ENCODE measurements at regions of chr7 and their contacts with region 1.

Region 1: DNA sequence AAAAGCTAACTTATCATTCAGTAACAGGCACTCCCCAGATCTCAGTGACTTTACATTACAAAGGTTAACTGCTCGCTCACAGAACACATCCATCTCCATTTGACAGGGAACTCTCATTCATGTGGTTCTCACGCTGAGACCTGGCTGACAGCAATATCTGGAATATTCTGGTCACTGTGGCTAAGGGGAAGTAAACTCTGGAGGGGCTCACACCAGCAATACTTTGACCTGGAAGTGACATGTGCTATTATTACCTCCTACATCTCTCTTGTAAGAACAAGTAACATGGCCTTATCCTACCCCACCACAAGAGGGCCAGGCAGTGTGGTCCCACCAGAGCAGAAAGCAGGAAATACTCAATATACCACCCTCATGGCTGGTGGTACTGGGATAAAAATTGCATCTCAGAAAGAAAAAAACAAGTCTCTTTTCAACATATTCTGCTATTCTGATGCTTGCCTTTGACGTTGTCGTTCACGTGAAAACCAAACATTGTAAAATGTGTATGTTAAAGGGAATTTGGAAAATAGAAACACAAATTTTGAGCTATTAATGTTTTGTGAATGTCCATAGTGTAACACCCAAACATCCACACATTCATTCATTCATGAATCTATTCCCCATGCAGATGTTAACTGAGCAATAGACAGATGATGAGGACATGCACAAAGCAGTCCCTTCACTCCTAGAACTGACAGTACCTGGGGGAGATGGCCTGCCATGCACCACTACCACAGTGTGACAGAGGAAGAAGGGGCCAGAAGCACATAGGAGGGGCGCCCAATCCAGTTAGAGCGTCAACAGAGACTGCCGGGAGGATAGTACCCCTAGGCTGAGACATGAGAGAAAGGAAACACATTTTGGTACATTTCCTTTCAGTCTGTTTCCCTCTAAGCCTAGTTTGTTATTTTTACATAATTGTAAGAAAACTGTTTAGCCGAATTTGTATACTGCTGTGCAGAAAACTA is 166.0 kb upstream of the SP4 start:
- DNase-seq: peak; percentile 1 to 65 (median 28)
- ATAC-seq: no peak
- H3K4me3 ChIP-seq: no peak overlapping the region
- H3K4me3 Mint-ChIP-seq: no peak overlapping the region
- H3K27ac ChIP-seq: no peak overlapping the region
- H3K27ac Mint-ChIP-seq: no peak overlapping the region
- H3K4me1 ChIP-seq: peaks cover 3% of the 10 kb centered on the region
- H3K4me1 Mint-ChIP-seq: peaks cover 9% of the 10 kb centered on the region
- H3K27me3 ChIP-seq: no peaks in the 10 kb centered on the region
- H3K27me3 Mint-ChIP-seq: peaks cover 5% of the 10 kb centered on the region
- CTCF ChIP-seq: peak; percentile 45

Region 2: DNA sequence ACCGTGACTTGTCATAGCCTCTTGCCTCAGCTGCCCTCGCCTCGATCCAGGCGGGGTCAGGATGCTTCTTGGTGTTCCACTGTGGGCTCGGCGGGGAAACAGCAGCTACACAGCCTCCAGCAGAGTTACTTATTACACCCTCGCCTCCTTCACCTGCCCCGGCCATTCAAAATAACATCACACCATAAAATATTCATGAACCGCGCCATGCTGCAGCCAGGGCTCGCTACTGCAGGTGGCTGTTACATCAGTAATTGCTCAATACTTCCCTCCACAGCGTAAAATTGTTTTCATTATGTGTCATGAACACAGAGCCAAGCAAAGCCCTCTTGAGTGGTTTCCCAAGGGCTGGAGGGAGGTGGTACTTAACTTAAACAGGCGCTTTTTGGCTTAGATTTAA is 233.7 kb before region 1 on chr7:
- CTCF ChIA-PET with region 1: no interaction called
- POLR2A ChIA-PET with region 1: no interaction called
- intact Hi-C with region 1: no loop called
- DNase-seq: no peak
- ATAC-seq: no peak
- H3K4me3 ChIP-seq: no peak overlapping the region
- H3K4me3 Mint-ChIP-seq: no peak overlapping the region
- H3K27ac ChIP-seq: no peak overlapping the region
- H3K27ac Mint-ChIP-seq: no peak overlapping the region
- H3K4me1 ChIP-seq: no peaks in the 10 kb centered on the region
- H3K4me1 Mint-ChIP-seq: no peaks in the 10 kb centered on the region
- H3K27me3 ChIP-seq: no peaks in the 10 kb centered on the region
- H3K27me3 Mint-ChIP-seq: peaks cover 6% of the 10 kb centered on the region
- CTCF ChIP-seq: no peak

Region 3: DNA sequence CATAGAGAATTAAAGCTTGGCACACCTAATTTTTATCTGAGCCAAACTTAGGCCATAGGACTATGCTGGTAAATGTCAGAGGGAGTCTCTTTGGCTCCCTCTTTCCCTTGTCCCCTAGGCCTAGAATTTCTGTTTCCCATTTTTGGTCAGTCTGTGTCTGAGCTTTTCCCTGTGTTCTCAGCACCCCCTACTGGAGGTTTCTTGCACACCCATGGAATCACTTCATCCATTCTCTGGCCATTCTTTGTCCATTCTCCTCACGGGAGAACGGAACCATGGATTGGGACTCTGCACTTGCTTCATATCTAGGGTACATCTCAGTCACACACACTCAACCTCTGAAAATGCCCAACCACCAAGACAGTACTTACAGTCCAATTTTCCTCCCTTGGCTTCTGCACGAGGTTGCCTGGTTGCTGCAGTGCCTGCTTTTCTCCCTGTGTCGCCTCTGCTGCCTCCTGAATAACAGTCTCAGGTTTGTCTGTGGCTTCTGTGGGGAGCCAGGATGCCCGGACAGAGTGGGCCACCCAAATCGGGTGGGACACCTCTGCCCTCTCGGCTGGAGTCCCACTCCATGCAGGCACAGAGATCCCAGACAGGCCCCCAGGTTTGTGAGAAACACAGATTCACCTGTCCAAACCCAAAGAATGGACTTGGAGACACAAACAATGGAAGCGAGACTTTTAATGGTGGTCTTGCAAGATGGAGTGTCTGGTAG is 245.9 kb after region 1 on chr7:
- CTCF ChIA-PET with region 1: interaction called, 3 read pairs
- POLR2A ChIA-PET with region 1: no interaction called
- intact Hi-C with region 1: loop called (anchors 2 kb)
- DNase-seq: peak in 6 of 14 experiments; percentile 3 to 53 (median 38)
- ATAC-seq: no peak
- H3K4me3 ChIP-seq: no peak overlapping the region
- H3K4me3 Mint-ChIP-seq: no peak overlapping the region
- H3K27ac ChIP-seq: no peak overlapping the region
- H3K27ac Mint-ChIP-seq: no peak overlapping the region
- H3K4me1 ChIP-seq: no peaks in the 10 kb centered on the region
- H3K4me1 Mint-ChIP-seq: no peaks in the 10 kb centered on the region
- H3K27me3 ChIP-seq: no peaks in the 10 kb centered on the region
- H3K27me3 Mint-ChIP-seq: no peaks in the 10 kb centered on the region
- CTCF ChIP-seq: peak; percentile 40

Region 4: DNA sequence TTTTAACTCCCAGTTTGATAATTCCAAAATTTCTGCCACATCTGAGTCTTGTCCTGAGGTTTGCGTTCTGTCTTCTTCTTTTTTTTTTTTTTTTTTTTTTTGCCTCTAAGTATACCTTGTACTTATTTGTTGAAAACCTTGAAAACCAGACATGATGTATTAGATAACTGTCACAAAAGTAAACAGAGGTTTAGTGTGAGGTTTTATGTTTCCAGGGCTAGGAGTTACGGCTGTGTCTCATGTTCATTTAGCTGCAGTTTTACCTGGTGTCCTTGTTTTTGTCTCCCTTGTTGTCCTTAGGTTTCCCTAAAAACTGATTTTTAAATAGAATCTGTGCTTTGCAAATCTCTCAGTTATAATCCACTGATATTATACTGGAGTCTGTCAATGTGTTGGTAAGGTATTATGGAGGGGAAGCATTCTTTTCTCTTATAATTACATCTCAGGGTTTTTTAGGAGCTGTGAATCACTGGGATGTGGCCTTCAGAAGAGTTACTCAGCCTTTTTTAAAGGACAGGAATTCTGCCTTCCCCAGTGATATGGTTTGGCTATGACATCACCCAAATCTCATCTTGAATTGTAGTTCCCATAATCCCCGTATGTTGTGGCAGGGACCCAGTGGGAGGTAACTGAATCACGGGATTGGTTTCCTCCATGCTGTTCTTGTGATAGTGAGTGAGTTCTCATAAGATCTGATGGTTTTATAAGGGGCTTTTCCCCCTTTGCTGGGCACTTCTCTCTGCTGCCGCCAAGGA is 588.8 kb after region 1 on chr7:
- CTCF ChIA-PET with region 1: no interaction called
- POLR2A ChIA-PET with region 1: no interaction called
- intact Hi-C with region 1: loop called (anchors 10 kb)
- DNase-seq: no peak
- ATAC-seq: no peak
- H3K4me3 ChIP-seq: no peak overlapping the region
- H3K4me3 Mint-ChIP-seq: no peak overlapping the region
- H3K27ac ChIP-seq: peak overlapping the region in 1 of 2 donors; percentile 53
- H3K27ac Mint-ChIP-seq: peak overlapping the region; percentile 82
- H3K4me1 ChIP-seq: peaks cover 11% of the 10 kb centered on the region
- H3K4me1 Mint-ChIP-seq: peaks cover 43% of the 10 kb centered on the region
- H3K27me3 ChIP-seq: no peaks in the 10 kb centered on the region
- H3K27me3 Mint-ChIP-seq: no peaks in the 10 kb centered on the region
- CTCF ChIP-seq: no peak